Activated CD4-positive, alpha-beta T cell treated with anti-CD3 and anti-CD28 coated beads for 36 hours (primary cell): ENCODE measurements at regions of chr5 and their contacts with region 1.

Region 1: DNA sequence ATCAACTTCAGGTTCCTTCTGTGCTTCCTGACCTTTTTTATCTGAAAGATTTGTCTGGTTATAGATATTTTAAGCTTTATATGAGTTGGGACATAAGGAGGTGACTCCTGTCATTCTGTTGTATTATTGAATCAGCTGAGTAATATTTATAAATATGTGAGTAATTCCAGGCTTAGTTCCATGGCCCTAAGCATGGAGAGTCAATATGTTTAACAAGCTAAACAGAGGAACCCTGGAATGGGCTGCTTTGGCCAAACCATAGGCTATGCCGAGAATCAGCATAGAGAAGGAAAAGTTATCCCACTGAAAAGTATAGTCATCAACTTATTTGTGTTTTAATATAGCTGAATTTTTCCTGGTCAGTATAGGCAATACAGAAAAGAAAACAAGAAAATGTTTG is 7.2 kb upstream of the EIF4EBP3 start:
- DNase-seq: no peak
- ATAC-seq: no peak
- H3K4me3 Mint-ChIP-seq: no peak overlapping the region
- H3K27ac Mint-ChIP-seq: no peak overlapping the region
- H3K4me1 Mint-ChIP-seq: peaks cover 2% of the 10 kb centered on the region
- H3K27me3 Mint-ChIP-seq: no peaks in the 10 kb centered on the region

Region 2: DNA sequence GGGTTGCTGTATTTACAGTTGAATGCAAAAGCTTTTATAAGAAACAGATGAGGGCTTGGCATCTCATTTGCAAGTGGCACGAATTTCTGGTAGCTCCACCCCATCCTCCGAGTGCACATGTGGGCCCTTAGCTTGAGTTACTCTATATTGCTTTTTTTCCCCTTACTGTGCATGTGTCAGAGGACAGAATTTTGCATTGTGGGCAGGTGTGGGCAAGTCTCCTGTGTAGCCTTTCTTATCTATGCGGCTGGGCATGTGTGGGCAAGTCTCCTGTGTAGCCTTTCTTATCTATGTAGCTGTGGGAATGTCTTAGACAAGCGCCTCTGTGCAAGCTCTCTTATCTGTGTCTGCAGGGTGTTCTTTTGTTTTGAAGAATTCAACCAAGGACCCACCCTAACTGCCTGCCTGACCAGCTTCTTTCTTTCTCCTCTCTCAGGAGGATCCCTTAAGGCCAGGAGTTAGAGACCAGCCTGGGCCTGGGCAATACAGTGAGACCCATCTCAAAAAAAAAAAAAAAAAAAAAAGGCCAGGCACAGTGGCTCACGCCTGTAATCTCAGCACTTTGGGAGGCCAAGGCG is 1308.0 kb before region 1 on chr5:
- CTCF ChIA-PET with region 1: no interaction called
- POLR2A ChIA-PET with region 1: no interaction called
- intact Hi-C with region 1: no loop called
- DNase-seq: no peak
- ATAC-seq: no peak
- H3K4me3 Mint-ChIP-seq: no peak overlapping the region
- H3K27ac Mint-ChIP-seq: no peak overlapping the region
- H3K4me1 Mint-ChIP-seq: no peaks in the 10 kb centered on the region
- H3K27me3 Mint-ChIP-seq: no peaks in the 10 kb centered on the region

Region 3: DNA sequence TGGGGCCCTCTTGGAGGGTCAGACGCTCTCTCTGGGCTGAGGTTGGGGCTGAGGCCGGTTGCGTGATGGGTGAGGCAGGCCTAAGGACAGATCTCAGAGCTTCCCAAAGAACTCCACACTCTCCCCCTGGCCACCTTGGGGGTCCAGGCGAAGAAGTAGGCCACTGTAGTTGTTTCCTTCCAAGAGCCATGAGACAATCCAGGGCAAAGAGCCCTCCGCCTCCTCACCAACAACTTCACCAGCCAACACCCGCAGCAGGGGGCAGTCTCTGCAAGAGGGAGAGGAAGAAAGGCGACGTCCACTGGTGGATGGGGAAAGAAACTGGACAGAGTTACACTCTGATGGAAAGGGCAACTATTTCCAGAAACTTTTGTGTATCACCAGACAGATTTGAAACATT is 35.1 kb after region 1 on chr5:
- CTCF ChIA-PET with region 1: no interaction called
- POLR2A ChIA-PET with region 1: no interaction called
- intact Hi-C with region 1: no loop called
- DNase-seq: peak; percentile 54
- ATAC-seq: no peak
- H3K4me3 Mint-ChIP-seq: no peak overlapping the region
- H3K27ac Mint-ChIP-seq: no peak overlapping the region
- H3K4me1 Mint-ChIP-seq: peaks cover under 1% of the 10 kb centered on the region
- H3K27me3 Mint-ChIP-seq: no peaks in the 10 kb centered on the region

Region 4: DNA sequence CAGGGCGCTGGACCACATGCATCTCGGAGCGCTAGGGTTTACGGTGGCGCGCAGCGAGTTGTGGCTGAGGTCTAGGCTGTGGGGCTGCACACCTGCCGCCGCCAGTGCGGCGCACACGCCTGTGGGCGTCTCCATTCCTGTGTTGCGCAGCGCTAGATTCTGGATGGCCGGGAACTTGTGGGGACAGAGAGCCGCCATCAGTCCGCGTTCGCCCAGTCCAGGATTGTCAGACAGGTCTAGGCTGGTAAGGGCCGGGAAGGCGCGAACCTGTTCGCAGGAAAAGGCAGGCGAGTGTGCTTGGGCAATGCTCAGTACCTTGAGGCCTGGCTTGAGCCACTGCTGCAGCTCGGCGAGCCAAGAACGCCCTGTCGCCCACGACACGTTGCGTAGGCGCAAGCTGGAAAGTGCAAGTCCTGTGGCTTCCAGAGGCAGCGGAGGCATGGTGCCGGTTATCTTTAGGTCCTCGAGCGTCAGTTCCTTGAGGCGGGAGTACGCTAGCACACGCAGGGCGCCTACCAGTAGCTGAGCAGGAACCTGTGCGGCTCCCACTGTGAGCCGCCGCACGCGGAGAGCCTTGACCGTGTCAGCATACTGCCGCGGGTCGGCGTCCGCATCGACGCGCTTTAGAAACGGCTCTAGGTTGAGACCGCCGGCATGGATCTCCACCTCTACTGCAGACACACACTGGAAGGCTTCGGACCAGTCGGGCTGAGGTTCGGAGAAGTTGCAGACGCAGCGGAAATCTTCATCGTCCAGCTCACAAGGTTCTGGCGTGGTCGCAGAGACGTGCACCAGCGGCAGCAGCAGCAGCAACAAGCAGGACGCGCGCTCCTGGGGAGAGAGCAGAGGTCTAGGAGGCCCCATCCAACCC is 92.2 kb after region 1 on chr5:
- CTCF ChIA-PET with region 1: interaction called, 10 read pairs
- POLR2A ChIA-PET with region 1: no interaction called
- intact Hi-C with region 1: no loop called
- DNase-seq: peak; percentile 69
- ATAC-seq: peak; percentile 67
- H3K4me3 Mint-ChIP-seq: peak overlapping the region; percentile 74
- H3K27ac Mint-ChIP-seq: peak overlapping the region; percentile 73
- H3K4me1 Mint-ChIP-seq: peaks cover 31% of the 10 kb centered on the region
- H3K27me3 Mint-ChIP-seq: peaks cover 14% of the 10 kb centered on the region